ENCODE measurements at regions of chr6 and their contacts with region 1.

Region 1: DNA sequence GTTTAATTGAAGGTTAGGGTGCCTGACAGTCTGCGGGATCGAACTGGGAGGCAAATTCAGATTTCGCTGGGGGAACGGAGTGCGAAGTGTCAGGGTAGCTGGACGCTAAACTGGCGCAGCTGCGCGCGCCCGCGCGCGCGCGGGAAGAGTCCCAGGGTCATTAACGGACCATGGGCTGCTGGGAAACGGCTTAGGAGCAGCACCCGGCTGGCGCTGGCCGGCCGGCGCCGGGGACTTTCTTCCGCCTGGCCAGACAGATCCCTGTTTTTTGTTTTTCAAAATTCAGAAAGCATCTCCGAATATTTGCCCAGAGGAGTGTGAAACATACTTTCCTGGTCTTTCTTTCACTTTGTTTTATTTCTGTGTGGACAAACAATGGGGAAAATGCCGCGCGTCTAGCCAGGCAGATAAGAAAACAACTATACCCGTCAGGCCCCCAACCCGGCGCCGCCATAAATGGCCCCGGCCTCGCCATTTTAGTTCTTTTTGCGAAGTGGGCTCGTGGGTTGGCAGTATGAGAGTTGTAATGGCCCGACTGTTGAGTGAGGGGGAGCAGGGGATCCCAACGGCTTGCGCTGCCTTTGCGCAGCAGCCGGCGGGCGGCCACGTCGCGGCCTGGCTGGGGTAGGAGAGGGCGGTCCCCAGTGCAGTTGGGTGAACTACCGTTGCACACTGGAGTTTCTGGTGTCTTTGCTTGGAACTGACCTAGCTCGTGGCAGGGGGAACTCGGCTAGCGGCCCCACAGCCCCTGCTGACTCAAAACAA is 7.1 kb downstream of the HSPA1B start:
- DNase-seq: peak; percentile 83
- H3K4me3 ChIP-seq: peak overlapping the region; percentile 38 to 98 (median 81)
- H3K27ac ChIP-seq: peak overlapping the region; percentile 97
- H3K4me1 ChIP-seq: peaks cover 32% of the 10 kb centered on the region
- H3K27me3 ChIP-seq: no peaks in the 10 kb centered on the region
- CTCF ChIP-seq: no peak
- POLR2A ChIP-seq: peak; percentile 100

Region 2: DNA sequence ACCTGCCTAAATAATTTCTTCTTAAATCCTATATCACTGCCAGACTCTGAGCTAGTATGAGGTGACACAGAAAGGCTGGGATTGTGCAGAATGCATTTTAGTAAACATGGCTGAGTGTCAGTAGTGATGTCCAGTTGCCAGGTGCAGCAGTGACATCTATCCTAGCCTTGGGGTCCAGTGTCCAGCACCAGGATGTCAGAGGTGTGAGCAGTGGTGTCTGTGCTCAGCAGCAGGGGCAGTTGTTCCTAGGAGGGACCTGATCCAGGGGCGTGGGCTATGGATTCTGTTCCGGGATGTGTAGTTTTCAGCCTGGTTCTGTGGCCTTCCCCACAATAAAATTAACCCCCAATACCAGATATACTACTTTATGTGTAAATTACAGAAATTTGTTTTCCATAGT is 568.7 kb before region 1 on chr6:
- CTCF ChIA-PET with region 1: no interaction called
- POLR2A ChIA-PET with region 1: no interaction called
- dilution Hi-C with region 1: no loop called
- intact Hi-C with region 1: no loop called
- DNase-seq: no peak
- H3K4me3 ChIP-seq: no peak overlapping the region
- H3K27ac ChIP-seq: no peak overlapping the region
- H3K4me1 ChIP-seq: peaks cover 3% of the 10 kb centered on the region
- H3K27me3 ChIP-seq: peaks cover 0 to 2% of the 10 kb centered on the region in 2 experiments
- CTCF ChIP-seq: no peak
- POLR2A ChIP-seq: no peak

Region 3: DNA sequence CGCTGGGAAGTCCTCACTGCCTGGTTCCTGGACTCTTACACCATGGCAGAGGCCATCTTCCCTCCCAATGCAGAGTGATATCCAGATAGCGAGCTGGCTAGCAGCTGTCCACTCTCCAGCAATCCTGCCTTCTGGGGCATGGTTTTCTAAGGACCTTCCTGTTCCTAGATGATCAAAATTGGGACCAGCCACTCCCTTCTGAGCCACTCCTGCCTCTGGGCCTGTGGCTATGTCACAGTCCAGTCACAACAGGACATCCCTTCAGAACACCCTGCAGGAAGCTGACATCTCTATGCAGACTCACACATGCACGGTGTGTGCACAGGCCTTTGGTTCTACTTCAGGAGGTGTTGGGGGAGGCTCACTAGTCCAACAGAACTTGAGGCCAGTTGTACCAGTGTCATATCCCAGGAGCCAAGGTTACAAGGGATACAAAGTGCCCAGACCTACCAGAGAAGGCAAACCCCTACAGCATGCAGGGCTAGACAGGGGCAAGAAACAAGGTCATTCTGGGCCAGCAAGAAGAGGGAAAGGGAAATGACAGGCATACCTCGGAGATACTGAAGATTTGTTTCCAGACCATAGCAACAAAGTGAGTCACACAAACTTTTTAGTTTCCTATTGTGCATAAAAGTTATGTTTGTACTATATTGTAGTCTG is 308.6 kb before region 1 on chr6:
- CTCF ChIA-PET with region 1: no interaction called
- POLR2A ChIA-PET with region 1: no interaction called
- dilution Hi-C with region 1: no loop called
- intact Hi-C with region 1: no loop called
- DNase-seq: peak; percentile 80
- H3K4me3 ChIP-seq: no peak overlapping the region
- H3K27ac ChIP-seq: peak overlapping the region; percentile 98
- H3K4me1 ChIP-seq: peaks cover 24% of the 10 kb centered on the region
- H3K27me3 ChIP-seq: no peaks in the 10 kb centered on the region
- CTCF ChIP-seq: no peak
- POLR2A ChIP-seq: no peak

Region 4: GRCh38 chr6:31619805-31620585 is 214.6 kb before region 1 on chr6:
- CTCF ChIA-PET with region 1: no interaction called
- POLR2A ChIA-PET with region 1: no interaction called
- dilution Hi-C with region 1: no loop called
- intact Hi-C with region 1: loop called (anchors 1 kb)
- DNase-seq: peak; percentile 100
- H3K4me3 ChIP-seq: peak overlapping the region in 2 of 3 experiments; percentile 57 to 80
- H3K27ac ChIP-seq: peak overlapping the region; percentile 95
- H3K4me1 ChIP-seq: peaks cover 13% of the 10 kb centered on the region
- H3K27me3 ChIP-seq: no peaks in the 10 kb centered on the region
- CTCF ChIP-seq: no peak
- POLR2A ChIP-seq: peak; percentile 73

Region 5: DNA sequence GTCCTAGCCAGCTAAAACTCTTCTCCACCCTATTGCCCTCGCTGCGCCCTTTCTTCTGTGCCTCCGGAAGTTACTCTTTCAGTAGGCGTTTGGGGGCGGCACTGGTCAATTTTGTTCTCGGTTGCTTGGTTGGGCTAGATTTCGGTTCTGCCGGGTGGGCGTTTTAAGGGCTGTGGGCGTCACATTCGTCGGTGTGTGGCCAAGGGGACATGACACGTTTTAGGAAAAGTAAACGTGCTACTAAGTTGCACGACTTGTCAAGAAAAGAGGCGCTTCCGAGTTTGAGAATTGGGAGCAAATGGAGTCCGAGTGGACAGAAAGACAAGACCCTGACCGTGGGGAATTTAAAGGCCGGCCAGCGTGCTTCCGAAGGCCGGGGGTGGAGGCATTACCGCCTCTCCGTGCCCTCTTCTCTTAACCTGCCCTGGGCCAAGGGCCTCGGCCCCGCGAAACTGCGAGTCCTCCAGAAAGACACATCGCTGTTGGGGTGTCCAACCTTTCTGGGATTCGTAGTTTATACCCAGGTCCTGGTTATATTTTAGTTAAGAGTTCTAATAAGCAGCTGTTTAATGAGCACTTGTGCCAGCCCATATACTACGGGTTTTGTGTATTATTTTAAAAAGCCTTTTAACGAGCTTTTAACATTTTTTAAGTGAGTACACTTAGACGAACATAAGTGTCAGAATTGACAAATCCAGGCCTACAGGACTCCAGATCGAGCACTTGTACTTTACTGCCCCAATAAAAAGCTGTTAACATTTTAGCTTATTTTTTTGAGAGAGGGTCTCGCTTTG is 181.5 kb before region 1 on chr6:
- CTCF ChIA-PET with region 1: interaction called, 14 read pairs
- POLR2A ChIA-PET with region 1: no interaction called
- dilution Hi-C with region 1: no loop called
- intact Hi-C with region 1: loop called (anchors 2 kb)
- DNase-seq: no peak
- H3K4me3 ChIP-seq: peak overlapping the region; percentile 23 to 80 (median 62)
- H3K27ac ChIP-seq: peak overlapping the region; percentile 83
- H3K4me1 ChIP-seq: peaks cover 23% of the 10 kb centered on the region
- H3K27me3 ChIP-seq: no peaks in the 10 kb centered on the region
- CTCF ChIP-seq: no peak
- POLR2A ChIP-seq: no peak

Region 6: GRCh38 chr6:31665501-31666336 is 168.9 kb before region 1 on chr6 and contains the start of gene CSNK2B:
- CTCF ChIA-PET with region 1: interaction called, 8 read pairs
- POLR2A ChIA-PET with region 1: no interaction called
- dilution Hi-C with region 1: no loop called
- intact Hi-C with region 1: loop called (anchors 5 kb)
- DNase-seq: peak; percentile 97
- H3K4me3 ChIP-seq: peak within 1 kb of the TSS; percentile 70 to 94 (median 72)
- H3K27ac ChIP-seq: peak within 1 kb of the TSS; percentile 77
- H3K4me1 ChIP-seq: peaks cover 28% of the 10 kb centered on the region
- H3K27me3 ChIP-seq: no peaks in the 10 kb centered on the region
- CTCF ChIP-seq: peak in 1 of 2 donors; percentile 13
- POLR2A ChIP-seq: peak; percentile 54
- total RNA-seq, gene CSNK2B: 206 and 214 TPM in 2 replicates

Region 7: GRCh38 chr6:31862344-31863227 is 28.0 kb after region 1 on chr6 and contains the start of gene NEU1:
- CTCF ChIA-PET with region 1: interaction called, 4 read pairs
- POLR2A ChIA-PET with region 1: interaction called, 17 read pairs
- dilution Hi-C with region 1: no loop called
- intact Hi-C with region 1: loop called (anchors 1 kb)
- DNase-seq: peak; percentile 100
- H3K4me3 ChIP-seq: peak within 1 kb of the TSS; percentile 71 to 88 (median 83)
- H3K27ac ChIP-seq: peak within 1 kb of the TSS; percentile 77
- H3K4me1 ChIP-seq: peaks cover 7% of the 10 kb centered on the region
- H3K27me3 ChIP-seq: no peaks in the 10 kb centered on the region
- CTCF ChIP-seq: no peak
- POLR2A ChIP-seq: peak; percentile 99
- total RNA-seq, gene NEU1: 61.3 and 62.8 TPM in 2 replicates

Region 8: DNA sequence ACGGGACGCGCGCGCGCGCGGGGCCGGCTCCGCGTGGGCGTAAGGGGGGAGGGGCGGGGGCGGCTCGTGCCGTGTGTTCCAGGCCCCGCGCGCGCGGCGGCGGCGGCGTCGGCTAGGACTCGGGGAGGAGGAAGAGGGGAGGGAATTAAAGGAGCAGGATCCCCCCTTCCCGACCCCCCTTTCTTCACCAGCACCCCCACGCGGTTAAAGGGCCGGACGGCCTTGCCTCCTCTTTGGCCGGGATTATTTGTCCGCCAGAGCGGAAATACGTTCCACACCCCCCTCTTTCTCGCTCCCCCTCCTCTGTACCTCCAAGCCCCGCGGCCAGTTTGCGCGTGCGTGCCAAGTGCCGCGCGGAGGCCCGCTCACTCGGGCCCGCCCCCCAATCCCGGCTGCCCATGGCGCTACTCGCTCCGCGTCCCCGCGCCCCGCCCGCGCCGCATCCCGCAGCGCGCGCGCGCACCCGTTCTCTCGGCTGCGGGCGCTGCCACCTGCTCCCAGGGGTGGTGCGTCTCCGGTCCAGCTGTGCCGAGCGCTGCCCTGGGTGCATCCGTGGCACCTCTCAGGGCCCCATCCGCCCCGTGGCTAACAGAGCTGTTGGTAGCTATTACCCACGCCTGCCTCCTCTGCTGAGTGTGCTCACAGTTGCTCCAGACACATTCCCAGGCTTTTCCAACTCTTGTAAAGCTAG is 67.5 kb after region 1 on chr6 and contains the start of gene ZBTB12:
- CTCF ChIA-PET with region 1: no interaction called
- POLR2A ChIA-PET with region 1: interaction called, 7 read pairs
- dilution Hi-C with region 1: no loop called
- intact Hi-C with region 1: loop called (anchors 5 kb)
- DNase-seq: peak; percentile 95
- H3K4me3 ChIP-seq: peak within 1 kb of the TSS; percentile 18 to 77 (median 45)
- H3K27ac ChIP-seq: no peak within 1 kb of the TSS
- H3K4me1 ChIP-seq: peaks cover 9% of the 10 kb centered on the region
- H3K27me3 ChIP-seq: peaks cover 5 to 12% of the 10 kb centered on the region in 2 experiments
- CTCF ChIP-seq: no peak
- POLR2A ChIP-seq: peak; percentile 56
- total RNA-seq, gene ZBTB12: 3.5 and 4.9 TPM in 2 replicates

Region 9: GRCh38 chr6:31958741-31959739 is 124.4 kb after region 1 on chr6 and contains the starts of genes NELFE and SKIC2:
- CTCF ChIA-PET with region 1: no interaction called
- POLR2A ChIA-PET with region 1: no interaction called
- dilution Hi-C with region 1: no loop called
- intact Hi-C with region 1: loop called (anchors 10 kb)
- DNase-seq: peak; percentile 98
- H3K4me3 ChIP-seq: peak within 1 kb of the TSS; percentile 66 to 84 (median 70)
- H3K27ac ChIP-seq: peak within 1 kb of the TSS; percentile 75
- H3K4me1 ChIP-seq: peaks cover 17% of the 10 kb centered on the region
- H3K27me3 ChIP-seq: no peaks in the 10 kb centered on the region
- CTCF ChIP-seq: no peak
- POLR2A ChIP-seq: peak; percentile 93
- total RNA-seq, gene NELFE: 68.5 and 71.3 TPM in 2 replicates
- total RNA-seq, gene SKIC2: 67.8 and 76.7 TPM in 2 replicates

Region 10: GRCh38 chr6:32047850-32048766 is 213.5 kb after region 1 on chr6:
- CTCF ChIA-PET with region 1: no interaction called
- POLR2A ChIA-PET with region 1: no interaction called
- dilution Hi-C with region 1: no loop called
- intact Hi-C with region 1: no loop called
- DNase-seq: peak; percentile 39
- H3K4me3 ChIP-seq: no peak overlapping the region
- H3K27ac ChIP-seq: no peak overlapping the region
- H3K4me1 ChIP-seq: peaks cover 10% of the 10 kb centered on the region
- H3K27me3 ChIP-seq: peaks cover 0 to 3% of the 10 kb centered on the region in 2 experiments
- CTCF ChIP-seq: peak; percentile 64 to 91
- POLR2A ChIP-seq: no peak

Region 11: GRCh38 chr6:32153564-32154513 is 319.2 kb after region 1 on chr6 and contains the start of gene PPT2:
- CTCF ChIA-PET with region 1: no interaction called
- POLR2A ChIA-PET with region 1: no interaction called
- dilution Hi-C with region 1: no loop called
- intact Hi-C with region 1: no loop called
- DNase-seq: peak; percentile 94
- H3K4me3 ChIP-seq: peak within 1 kb of the TSS; percentile 41 to 71 (median 60)
- H3K27ac ChIP-seq: peak within 1 kb of the TSS; percentile 51
- H3K4me1 ChIP-seq: peaks cover 24% of the 10 kb centered on the region
- H3K27me3 ChIP-seq: peaks cover 4 to 5% of the 10 kb centered on the region in 2 experiments
- CTCF ChIP-seq: peak in 1 of 2 donors; percentile 16
- POLR2A ChIP-seq: peak; percentile 61
- total RNA-seq, gene PPT2: 27.2 and 27.6 TPM in 2 replicates

Measured in endothelial cell of umbilical vein (primary cell).